ENCODE measurements at regions of chr1 and their contacts with region 1.

Region 1: DNA sequence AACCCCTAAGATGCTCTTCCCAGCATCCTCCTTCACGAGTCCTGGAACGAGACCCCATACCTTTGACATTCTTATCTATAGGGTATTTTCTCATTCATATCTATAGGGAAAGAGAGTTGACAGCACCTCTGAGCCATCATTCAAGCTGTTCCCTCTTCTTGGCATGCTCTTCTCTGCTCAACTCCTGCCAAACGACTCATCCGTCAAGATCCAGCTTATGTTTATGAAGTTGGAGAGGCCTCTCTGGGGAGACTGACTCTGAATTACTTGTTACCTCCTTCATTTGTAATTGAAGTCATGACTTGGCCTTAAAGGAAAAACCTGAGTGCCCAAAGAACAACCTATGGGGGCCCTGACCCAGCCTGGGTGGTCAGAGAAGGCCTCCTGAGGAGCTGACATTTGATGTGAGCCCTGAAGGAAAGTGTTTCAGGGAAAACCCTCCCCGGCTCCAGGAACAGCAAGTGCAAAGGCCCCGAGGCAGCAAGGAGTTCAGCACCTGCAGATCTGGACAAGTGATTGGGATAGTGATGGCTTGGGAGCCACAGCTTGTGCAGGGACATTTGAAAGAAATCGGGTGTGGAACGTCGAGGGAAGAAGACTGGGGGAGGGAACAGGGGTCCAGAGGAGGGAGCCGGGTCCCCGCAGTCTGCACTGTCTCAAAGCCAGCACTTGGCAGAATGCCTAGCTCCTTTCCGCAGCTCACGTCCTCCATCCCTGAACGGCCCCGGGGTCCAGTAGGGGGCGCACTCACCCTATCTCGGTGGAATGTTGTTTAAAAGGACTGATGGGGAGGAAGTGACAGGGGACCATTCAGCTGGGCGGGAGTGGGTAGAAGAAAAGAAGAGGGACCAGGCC is 14.0 kb upstream of the CDA start:
- DNase-seq: peak; percentile 90 to 95 (median 91)
- ATAC-seq: peak; percentile 95 to 99 (median 98)
- H3K4me3 ChIP-seq: no peak overlapping the region
- H3K27ac ChIP-seq: no peak overlapping the region
- H3K4me1 ChIP-seq: no peaks in the 10 kb centered on the region
- H3K27me3 ChIP-seq: no peaks in the 10 kb centered on the region
- CTCF ChIP-seq: peak; percentile 82 to 90 (median 86)
- POLR2A ChIP-seq: no peak

Region 2: GRCh38 chr1:20483833-20484518 is 90.9 kb before region 1 on chr1:
- intact Hi-C with region 1: no loop called
- DNase-seq: peak; percentile 44 to 61 (median 58)
- ATAC-seq: peak; percentile 8 to 43 (median 26)
- H3K4me3 ChIP-seq: peak overlapping the region; percentile 62 to 70 (median 63)
- H3K27ac ChIP-seq: peak overlapping the region; percentile 52 to 76 (median 53)
- H3K4me1 ChIP-seq: peaks cover 0 to 50% (median 12%) of the 10 kb centered on the region in 4 donors
- H3K27me3 ChIP-seq: no peaks in the 10 kb centered on the region
- CTCF ChIP-seq: peak in 3 of 4 donors; percentile 15 to 29 (median 21)
- POLR2A ChIP-seq: no peak

Region 3: DNA sequence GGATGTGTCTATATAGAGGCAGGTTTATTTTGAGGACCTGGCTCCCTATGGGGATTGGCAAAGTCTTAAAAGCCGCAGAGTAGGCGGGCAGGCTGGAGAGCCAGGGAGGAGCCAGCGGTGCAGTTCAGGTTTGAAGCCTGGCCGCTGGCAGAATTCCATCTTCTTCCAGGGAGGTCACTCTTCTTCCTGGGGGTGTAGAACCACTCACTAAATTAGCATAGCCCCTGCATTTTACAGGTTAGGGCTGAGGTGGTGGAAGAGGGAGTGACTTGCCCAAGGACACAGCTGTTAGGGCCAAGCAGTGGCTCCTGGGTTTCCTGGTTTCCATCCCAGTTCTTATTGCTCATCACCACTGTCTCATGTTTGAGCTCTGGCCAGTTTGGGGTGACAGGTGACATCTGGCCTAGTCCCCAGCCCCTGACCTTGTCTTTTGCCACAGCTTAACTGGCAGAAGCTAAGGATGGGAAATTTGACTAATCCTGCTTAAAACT is 59.7 kb after region 1 on chr1:
- intact Hi-C with region 1: loop called (anchors 5 kb)
- DNase-seq: peak; percentile 57 to 77 (median 66)
- ATAC-seq: peak; percentile 55 to 67 (median 62)
- H3K4me3 ChIP-seq: peak overlapping the region; percentile 80 to 89 (median 88)
- H3K27ac ChIP-seq: peak overlapping the region in 2 of 3 donors; percentile 96 to 97
- H3K4me1 ChIP-seq: peaks cover 0 to 19% (median 9%) of the 10 kb centered on the region in 4 donors
- H3K27me3 ChIP-seq: no peaks in the 10 kb centered on the region
- CTCF ChIP-seq: no peak
- POLR2A ChIP-seq: no peak

Region 4: DNA sequence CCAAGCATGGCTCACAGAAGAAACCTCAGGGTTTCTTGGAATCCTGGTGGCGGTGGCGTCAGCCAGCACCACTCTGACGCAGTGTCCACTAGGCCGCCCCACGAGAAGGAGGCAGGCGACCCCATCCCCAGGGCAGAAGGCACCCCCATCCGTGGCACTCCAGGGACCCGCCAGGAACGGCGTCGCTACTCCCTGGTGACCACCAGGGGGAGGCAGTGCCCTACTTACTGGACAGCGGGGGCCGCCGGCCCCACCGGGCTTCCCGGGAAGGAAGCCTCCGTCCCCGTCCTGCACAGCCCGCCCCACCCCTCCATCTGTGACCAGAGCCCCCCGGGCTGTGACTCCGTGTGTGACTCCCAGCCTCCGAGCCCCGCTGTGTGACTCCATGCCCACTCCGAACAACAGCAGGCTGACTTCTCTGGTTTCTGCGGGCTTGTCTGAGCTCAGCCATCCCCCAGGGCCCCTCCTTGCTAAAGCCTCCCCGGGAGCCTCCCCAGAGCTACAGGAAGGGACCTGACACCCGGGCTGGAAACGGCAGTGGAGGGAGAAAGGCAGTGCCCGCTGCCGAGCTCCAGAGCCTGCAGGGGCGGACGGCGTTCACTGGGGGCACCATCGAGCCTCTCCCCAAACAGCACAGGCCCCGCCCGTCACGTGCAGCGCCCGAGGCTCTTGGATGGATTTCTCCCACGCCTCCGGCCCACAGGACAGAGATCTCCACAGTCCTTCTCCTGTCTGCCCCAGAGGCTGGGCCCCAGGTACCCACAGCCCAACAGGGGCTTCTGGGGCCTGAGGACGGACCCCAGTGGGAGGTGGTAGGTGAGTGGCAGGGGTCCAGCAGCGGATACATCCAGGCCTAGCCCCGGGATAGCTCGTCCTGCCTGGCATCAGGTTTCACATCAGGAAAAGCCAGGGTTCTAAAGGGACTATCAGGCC is 121.8 kb after region 1 on chr1:
- intact Hi-C with region 1: no loop called
- DNase-seq: peak; percentile 80 to 85 (median 85)
- ATAC-seq: peak; percentile 92 to 96 (median 92)
- H3K4me3 ChIP-seq: peak overlapping the region; percentile 45 to 61 (median 56)
- H3K27ac ChIP-seq: peak overlapping the region; percentile 21 to 64 (median 27)
- H3K4me1 ChIP-seq: no peaks in the 10 kb centered on the region
- H3K27me3 ChIP-seq: no peaks in the 10 kb centered on the region
- CTCF ChIP-seq: peak; percentile 82 to 93 (median 89)
- POLR2A ChIP-seq: peak; percentile 24

Region 5: DNA sequence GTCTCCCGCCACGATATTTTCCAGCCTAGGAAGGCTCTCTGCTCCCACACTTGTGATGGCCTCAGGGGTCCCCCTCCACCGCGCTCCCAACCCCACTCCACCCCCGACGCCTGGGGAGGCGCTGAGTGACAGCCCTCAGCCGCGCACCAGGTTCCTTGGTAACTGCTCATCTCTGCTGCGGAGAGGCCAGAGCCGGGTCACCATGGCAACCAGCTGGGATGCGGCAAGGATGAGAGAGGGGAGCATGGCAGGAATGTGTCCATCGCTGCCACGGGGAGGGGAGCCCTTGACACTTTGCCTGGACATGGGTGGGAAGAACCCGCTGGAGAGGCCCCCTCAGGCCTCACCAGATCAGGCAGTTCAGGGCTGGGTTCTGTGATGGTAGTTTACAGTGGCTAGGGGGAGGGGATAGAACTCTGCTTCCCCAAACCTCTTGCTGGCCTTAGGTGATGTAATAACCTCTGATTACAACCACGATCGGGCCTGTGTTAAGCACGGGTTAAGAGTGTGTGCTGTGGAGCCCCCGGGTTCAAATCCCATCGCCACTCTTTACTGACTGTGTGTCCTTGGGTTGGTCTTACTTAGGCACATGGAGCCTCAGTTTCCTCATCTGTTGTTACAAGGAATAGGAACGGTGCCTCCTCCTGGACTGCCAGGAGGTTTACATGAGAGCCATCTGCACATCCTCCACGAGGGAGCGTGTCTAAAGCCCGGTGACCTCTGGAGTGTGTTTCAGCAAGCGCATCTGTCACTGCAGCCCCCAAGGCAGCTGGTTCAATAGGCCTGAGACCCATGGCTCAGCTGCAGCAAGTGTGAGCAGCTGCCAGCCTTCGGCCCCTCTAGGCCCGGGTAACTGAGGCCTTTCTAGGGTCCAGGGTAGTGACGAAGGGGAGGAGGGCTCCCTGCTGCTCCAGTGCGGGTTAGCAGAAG is 136.6 kb after region 1 on chr1:
- intact Hi-C with region 1: no loop called
- DNase-seq: no peak
- ATAC-seq: no peak
- H3K4me3 ChIP-seq: no peak overlapping the region
- H3K27ac ChIP-seq: no peak overlapping the region
- H3K4me1 ChIP-seq: no peaks in the 10 kb centered on the region
- H3K27me3 ChIP-seq: no peaks in the 10 kb centered on the region
- CTCF ChIP-seq: no peak
- POLR2A ChIP-seq: no peak